ENCODE measurements at regions of chr10 and their contacts with region 1.

Region 1: GRCh38 chr10:79322616-79323543 is 24.4 kb upstream of the PPIF start:
- DNase-seq: peak; percentile 64 to 91 (median 86)
- H3K4me3 ChIP-seq: peak overlapping the region; percentile 36
- H3K4me3 Mint-ChIP-seq: peak overlapping the region; percentile 57 to 83 (median 75)
- H3K27ac ChIP-seq: peak overlapping the region; percentile 32
- H3K27ac Mint-ChIP-seq: peak overlapping the region; percentile 83 to 98 (median 94)
- H3K4me1 ChIP-seq: peaks cover 73% of the 10 kb centered on the region
- H3K4me1 Mint-ChIP-seq: peaks cover 69 to 72% (median 71%) of the 10 kb centered on the region in 3 donors
- H3K27me3 ChIP-seq: no peaks in the 10 kb centered on the region
- H3K27me3 Mint-ChIP-seq: peaks cover 0 to 1% of the 10 kb centered on the region in 2 donors

Region 2: DNA sequence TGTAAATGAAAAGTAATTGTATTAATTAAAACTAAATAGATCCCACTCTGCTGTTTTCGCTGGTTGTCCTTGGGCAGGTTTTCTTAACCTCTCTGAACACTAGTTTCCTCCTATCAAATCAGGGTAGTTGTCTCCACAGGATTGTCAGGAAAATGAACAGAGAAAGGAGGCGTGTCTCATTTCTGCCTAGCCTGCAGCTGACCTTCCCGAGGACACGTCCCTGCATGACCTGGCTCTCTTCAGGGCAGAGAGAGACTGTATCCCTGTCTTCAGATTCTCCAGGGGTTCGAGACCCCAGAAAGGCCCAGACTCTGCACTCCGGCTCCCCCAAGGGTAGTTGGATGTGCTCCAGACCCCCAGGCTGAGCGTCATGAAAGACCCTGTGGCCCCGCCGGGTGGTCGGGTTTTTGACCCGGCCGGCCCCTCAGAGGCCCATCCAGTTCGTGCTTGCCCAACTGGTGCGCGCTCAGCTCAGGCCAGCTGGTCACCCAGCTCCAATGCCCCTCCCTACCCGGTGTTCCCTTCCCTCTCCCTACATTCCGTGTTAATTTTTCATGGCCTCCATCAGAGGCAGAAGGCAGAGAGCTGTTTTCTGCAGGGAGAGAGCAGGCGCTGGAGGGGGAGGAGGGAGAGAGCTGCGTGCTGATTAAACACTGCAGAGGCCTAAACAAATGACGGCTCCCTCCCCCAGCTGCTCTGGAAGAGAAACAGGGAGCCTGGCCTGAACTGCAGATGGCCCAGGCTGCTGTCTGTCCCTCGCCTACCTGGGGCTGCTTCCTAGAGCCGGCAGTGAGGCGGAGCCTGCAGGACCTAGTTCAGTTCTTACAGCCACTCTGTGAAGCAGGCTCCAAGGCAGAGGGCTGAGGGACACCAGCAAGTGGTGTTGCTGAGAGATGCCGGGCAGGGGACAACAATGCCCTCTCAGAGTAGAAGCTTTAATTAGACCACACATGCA is 61.8 kb before region 1 on chr10:
- CTCF ChIA-PET with region 1: no interaction called
- POLR2A ChIA-PET with region 1: no interaction called
- DNase-seq: no peak
- H3K4me3 ChIP-seq: no peak overlapping the region
- H3K4me3 Mint-ChIP-seq: no peak overlapping the region
- H3K27ac ChIP-seq: no peak overlapping the region
- H3K27ac Mint-ChIP-seq: peak overlapping the region in 5 of 8 donors; percentile 42 to 84 (median 58)
- H3K4me1 ChIP-seq: peaks cover 3% of the 10 kb centered on the region
- H3K4me1 Mint-ChIP-seq: peaks cover 26 to 61% (median 27%) of the 10 kb centered on the region in 3 donors
- H3K27me3 ChIP-seq: no peaks in the 10 kb centered on the region
- H3K27me3 Mint-ChIP-seq: no peaks in the 10 kb centered on the region

Region 3: DNA sequence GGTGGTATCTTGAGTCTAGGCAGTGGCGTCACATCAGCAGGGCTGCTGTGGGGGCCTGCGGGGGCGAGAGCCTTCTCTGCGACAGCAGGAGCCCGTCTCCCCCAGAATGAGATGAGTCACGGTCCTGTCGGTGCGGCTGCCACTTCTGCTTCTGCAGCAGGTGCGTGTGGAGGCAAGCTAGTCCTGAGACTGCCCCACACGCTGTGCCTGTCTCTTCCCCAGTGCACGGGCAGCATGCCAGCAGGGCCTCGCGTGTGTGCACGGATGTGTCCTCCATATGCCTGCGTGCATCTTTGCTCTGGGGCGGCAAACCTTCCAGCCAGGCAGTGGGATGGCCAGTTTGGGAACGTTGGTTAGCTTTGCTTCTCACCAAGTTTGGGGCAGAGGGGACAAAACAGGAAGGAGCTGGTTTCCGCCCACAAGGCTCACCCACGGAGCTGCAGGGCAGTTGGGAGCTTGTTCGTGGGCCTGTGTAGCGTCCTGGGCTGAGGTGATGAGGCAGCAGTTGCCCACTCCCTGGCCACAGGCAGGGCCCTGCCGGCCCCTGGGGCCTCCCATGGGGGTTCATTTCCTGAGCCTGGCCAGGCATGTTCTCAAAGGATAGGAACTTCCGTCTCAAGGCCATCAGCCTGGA is 36.4 kb before region 1 on chr10:
- CTCF ChIA-PET with region 1: interaction called, 11 read pairs
- POLR2A ChIA-PET with region 1: interaction called, 11 read pairs
- DNase-seq: peak; percentile 63 to 95 (median 73)
- H3K4me3 ChIP-seq: peak overlapping the region; percentile 41
- H3K4me3 Mint-ChIP-seq: peak overlapping the region; percentile 7 to 89 (median 82)
- H3K27ac ChIP-seq: peak overlapping the region; percentile 36
- H3K27ac Mint-ChIP-seq: peak overlapping the region; percentile 93 to 100 (median 96)
- H3K4me1 ChIP-seq: peaks cover 47% of the 10 kb centered on the region
- H3K4me1 Mint-ChIP-seq: peaks cover 48 to 68% (median 53%) of the 10 kb centered on the region in 3 donors
- H3K27me3 ChIP-seq: no peaks in the 10 kb centered on the region
- H3K27me3 Mint-ChIP-seq: no peaks in the 10 kb centered on the region

Region 4: GRCh38 chr10:79347226-79347893 is 24.5 kb after region 1 on chr10 and contains the start of gene PPIF:
- CTCF ChIA-PET with region 1: interaction called, 37 read pairs
- POLR2A ChIA-PET with region 1: interaction called, 12 read pairs
- DNase-seq: peak; percentile 88 to 92 (median 89)
- H3K4me3 ChIP-seq: peak within 1 kb of the TSS; percentile 56
- H3K4me3 Mint-ChIP-seq: peak within 1 kb of the TSS; percentile 77 to 91 (median 82)
- H3K27ac ChIP-seq: peak within 1 kb of the TSS; percentile 80
- H3K27ac Mint-ChIP-seq: peak within 1 kb of the TSS; percentile 78 to 98 (median 92)
- H3K4me1 ChIP-seq: peaks cover 33% of the 10 kb centered on the region
- H3K4me1 Mint-ChIP-seq: peaks cover 25 to 46% (median 28%) of the 10 kb centered on the region in 3 donors
- H3K27me3 ChIP-seq: no peaks in the 10 kb centered on the region
- H3K27me3 Mint-ChIP-seq: no peaks in the 10 kb centered on the region
- total RNA-seq, gene PPIF: 173 to 181 TPM

Measured in CD8-positive, alpha-beta memory T cell (primary cell).